B cell (primary cell): ENCODE measurements at regions of chr19 and their contacts with region 1.

Region 1: DNA sequence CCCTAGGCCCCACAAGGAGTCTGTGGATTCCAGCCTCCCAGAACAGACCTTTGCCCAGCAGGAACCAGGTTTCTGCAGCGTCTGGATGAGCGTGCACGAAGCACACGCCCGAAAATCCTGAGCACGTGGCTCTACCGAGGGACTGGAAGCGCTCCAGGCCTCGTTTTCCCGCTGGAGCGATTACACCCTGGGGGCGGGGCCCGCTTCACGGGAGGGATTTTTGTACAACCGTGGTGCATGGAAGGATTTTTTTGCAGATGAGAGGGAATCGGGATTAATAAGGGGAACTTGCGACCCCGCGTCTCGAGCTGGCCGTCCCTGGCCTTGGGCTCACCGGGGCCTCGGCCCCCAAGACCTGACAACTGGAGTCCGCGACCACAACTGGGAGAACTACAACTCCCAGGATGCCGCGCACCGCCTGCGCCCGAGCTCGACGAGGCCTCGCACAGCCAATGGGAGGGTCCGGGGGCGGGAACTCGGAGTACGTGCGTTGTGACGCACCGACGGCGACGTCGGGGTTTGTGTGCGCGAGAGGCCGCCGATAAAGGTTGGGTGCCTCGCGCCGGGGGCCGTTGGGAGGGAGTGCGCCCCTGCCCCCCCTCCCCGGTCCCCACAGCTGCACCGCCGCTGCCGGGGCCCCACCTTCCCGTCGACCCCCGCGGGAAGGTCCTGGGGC is at the start of gene ZNF628:
- DNase-seq: peak; percentile 99
- ATAC-seq: peak; percentile 90
- H3K4me3 ChIP-seq: peak within 1 kb of the TSS; percentile 63 to 97 (median 77)
- H3K4me3 Mint-ChIP-seq: peak within 1 kb of the TSS; percentile 95
- H3K27ac ChIP-seq: peak within 1 kb of the TSS; percentile 69 to 92
- H3K27ac Mint-ChIP-seq: peak within 1 kb of the TSS; percentile 97
- H3K4me1 ChIP-seq: peaks cover 15 to 21% of the 10 kb centered on the region in 2 donors
- H3K4me1 Mint-ChIP-seq: peaks cover 34% of the 10 kb centered on the region
- H3K27me3 ChIP-seq: no peaks in the 10 kb centered on the region
- H3K27me3 Mint-ChIP-seq: no peaks in the 10 kb centered on the region
- CTCF ChIP-seq: no peak
- total RNA-seq, gene ZNF628: 13.3 and 15.5 TPM in 2 replicates

Region 2: GRCh38 chr19:55216461-55217198 is 259.6 kb before region 1 on chr19:
- CTCF ChIA-PET with region 1: no interaction called
- POLR2A ChIA-PET with region 1: interaction called, 12 read pairs
- intact Hi-C with region 1: no loop called
- DNase-seq: peak; percentile 59
- ATAC-seq: peak; percentile 58
- H3K4me3 ChIP-seq: no peak overlapping the region
- H3K4me3 Mint-ChIP-seq: no peak overlapping the region
- H3K27ac ChIP-seq: no peak overlapping the region
- H3K27ac Mint-ChIP-seq: no peak overlapping the region
- H3K4me1 ChIP-seq: peaks cover 8 to 11% of the 10 kb centered on the region in 2 donors
- H3K4me1 Mint-ChIP-seq: peaks cover 11% of the 10 kb centered on the region
- H3K27me3 ChIP-seq: peaks cover 0 to 31% (median 10%) of the 10 kb centered on the region in 4 experiments
- H3K27me3 Mint-ChIP-seq: peaks cover 22% of the 10 kb centered on the region
- CTCF ChIP-seq: no peak

Region 3: DNA sequence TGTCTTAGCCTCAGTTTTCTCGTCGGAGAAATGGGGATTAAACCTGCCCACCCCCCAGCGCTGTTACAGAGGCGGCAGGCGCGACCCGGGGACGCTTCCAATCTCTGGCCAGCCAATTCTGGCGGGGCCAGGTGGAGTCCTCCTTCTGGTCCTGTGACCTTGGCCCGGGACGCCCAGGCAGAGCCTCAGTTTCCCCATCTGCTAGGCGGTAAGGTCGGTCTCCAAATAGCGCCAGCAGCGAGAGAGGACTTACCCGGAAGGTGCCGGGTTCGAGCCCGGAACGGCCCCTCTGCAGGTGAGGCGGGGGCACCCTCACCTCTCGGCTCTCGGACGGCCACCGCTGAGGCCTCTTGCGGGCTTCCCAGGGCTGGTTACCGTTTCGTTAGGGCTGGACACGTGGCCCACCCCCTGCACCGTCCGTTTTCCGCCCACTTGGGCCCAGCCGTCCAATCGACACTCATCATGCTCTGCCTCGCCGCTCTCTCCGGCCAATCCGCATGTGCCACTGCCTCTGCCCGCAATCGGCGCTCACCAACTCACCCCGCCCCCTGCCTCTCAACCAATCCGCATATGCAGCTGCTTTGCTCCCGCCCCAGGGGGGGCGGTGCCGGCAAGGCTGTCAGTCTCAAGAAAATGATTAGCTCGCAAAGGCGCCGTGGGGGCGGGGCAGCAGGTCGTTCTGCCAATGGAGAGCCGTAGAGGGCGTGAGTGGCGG is 14.8 kb before region 1 on chr19 and contains the start of gene ISOC2:
- CTCF ChIA-PET with region 1: interaction called, 34 read pairs
- POLR2A ChIA-PET with region 1: interaction called, 14 read pairs
- intact Hi-C with region 1: loop called (anchors 1 kb)
- DNase-seq: peak; percentile 100
- ATAC-seq: peak; percentile 97
- H3K4me3 ChIP-seq: peak within 1 kb of the TSS; percentile 56 to 98 (median 90)
- H3K4me3 Mint-ChIP-seq: peak within 1 kb of the TSS; percentile 87
- H3K27ac ChIP-seq: peak within 1 kb of the TSS; percentile 73 to 78
- H3K27ac Mint-ChIP-seq: peak within 1 kb of the TSS; percentile 81
- H3K4me1 ChIP-seq: peaks cover 10 to 14% of the 10 kb centered on the region in 2 donors
- H3K4me1 Mint-ChIP-seq: peaks cover 20% of the 10 kb centered on the region
- H3K27me3 ChIP-seq: no peaks in the 10 kb centered on the region
- H3K27me3 Mint-ChIP-seq: no peaks in the 10 kb centered on the region
- CTCF ChIP-seq: no peak
- total RNA-seq, gene ISOC2: 10.0 and 11.1 TPM in 2 replicates

Region 4: GRCh38 chr19:55653758-55654539 is 177.7 kb after region 1 on chr19:
- CTCF ChIA-PET with region 1: interaction called, 3 read pairs
- POLR2A ChIA-PET with region 1: interaction called, 12 read pairs
- intact Hi-C with region 1: no loop called
- DNase-seq: peak; percentile 100
- ATAC-seq: peak; percentile 77
- H3K4me3 ChIP-seq: peak overlapping the region; percentile 66 to 98 (median 92)
- H3K4me3 Mint-ChIP-seq: peak overlapping the region; percentile 93
- H3K27ac ChIP-seq: peak overlapping the region; percentile 98 to 100
- H3K27ac Mint-ChIP-seq: peak overlapping the region; percentile 96
- H3K4me1 ChIP-seq: peaks cover 41 to 53% of the 10 kb centered on the region in 2 donors
- H3K4me1 Mint-ChIP-seq: peaks cover 56% of the 10 kb centered on the region
- H3K27me3 ChIP-seq: no peaks in the 10 kb centered on the region
- H3K27me3 Mint-ChIP-seq: no peaks in the 10 kb centered on the region
- CTCF ChIP-seq: peak; percentile 100